Activated CD4-positive, alpha-beta T cell treated with anti-CD3 and anti-CD28 coated beads, Interleukin-2, amount 10 ng/mL, durations not matched to agents 7 days and 5 days (primary cell): ENCODE measurements at regions of chr20 and their contacts with region 1.

Region 1: DNA sequence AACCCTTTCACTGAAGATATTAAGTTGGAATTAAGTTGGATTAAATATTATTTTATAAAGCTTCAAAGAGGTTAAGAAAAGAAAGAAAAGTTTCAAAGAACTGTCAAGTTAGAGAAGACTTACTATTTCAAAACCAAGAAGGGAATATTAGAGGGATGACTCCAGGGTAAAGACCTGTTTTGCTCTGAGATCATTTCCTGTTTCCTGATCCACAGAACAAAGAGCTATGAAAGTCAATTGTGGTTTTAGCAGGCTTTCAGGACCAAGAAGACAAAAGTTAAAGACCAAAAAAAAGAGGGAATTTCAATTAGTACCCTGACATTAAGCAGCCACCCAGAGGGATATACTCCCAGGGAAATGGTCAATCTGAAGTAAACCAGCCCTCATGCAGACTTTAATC is 19.4 kb downstream of the ESF1 start:
- DNase-seq: no peak
- H3K4me3 Mint-ChIP-seq: no peak overlapping the region
- H3K27ac Mint-ChIP-seq: no peak overlapping the region
- H3K4me1 Mint-ChIP-seq: peaks cover 6% of the 10 kb centered on the region
- H3K27me3 Mint-ChIP-seq: no peaks in the 10 kb centered on the region

Region 2: DNA sequence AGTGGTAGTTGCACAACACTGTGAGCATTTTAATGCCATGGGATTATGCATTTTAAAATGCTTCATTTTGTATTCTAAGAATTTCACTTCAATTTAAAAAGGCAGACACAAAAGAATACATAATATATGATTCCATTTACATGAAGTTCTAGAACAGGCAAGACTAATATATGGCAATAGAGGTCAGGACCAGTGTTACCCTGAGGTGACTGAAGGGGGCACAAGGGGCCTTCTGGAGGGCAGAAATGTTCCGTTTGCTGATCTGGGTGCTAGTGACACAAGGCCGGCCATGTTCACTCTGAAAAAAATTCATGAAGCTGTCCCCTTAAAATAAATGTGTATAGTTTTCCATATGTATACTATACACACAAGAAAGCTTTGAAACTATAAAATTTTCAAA is 155.1 kb before region 1 on chr20:
- CTCF ChIA-PET with region 1: no interaction called
- POLR2A ChIA-PET with region 1: no interaction called
- DNase-seq: no peak
- H3K4me3 Mint-ChIP-seq: no peak overlapping the region
- H3K27ac Mint-ChIP-seq: no peak overlapping the region
- H3K4me1 Mint-ChIP-seq: no peaks in the 10 kb centered on the region
- H3K27me3 Mint-ChIP-seq: no peaks in the 10 kb centered on the region

Region 3: DNA sequence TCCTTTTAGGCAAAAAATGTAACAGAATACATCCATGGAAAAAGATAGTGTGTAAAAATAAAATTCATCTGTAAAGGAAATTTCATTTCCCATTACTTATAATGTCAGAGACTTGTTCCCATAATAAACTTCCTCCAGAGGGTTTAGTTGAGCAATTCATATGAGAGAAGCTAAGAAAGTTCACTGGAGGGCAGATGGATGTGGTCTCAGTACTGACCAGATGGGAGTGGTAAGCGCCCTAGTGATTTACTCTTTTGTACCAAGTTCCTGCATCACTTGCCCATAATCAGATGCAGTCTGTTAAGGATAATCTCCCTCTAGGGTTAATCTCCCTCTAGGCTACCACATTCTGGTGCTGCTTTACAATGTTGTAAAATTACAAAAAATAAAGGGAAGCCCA is 42.3 kb before region 1 on chr20:
- CTCF ChIA-PET with region 1: no interaction called
- POLR2A ChIA-PET with region 1: interaction called, 10 read pairs
- DNase-seq: no peak
- H3K4me3 Mint-ChIP-seq: no peak overlapping the region
- H3K27ac Mint-ChIP-seq: no peak overlapping the region
- H3K4me1 Mint-ChIP-seq: no peaks in the 10 kb centered on the region
- H3K27me3 Mint-ChIP-seq: no peaks in the 10 kb centered on the region